ENCODE measurements at regions of chr7 and their contacts with region 1.

Region 1: DNA sequence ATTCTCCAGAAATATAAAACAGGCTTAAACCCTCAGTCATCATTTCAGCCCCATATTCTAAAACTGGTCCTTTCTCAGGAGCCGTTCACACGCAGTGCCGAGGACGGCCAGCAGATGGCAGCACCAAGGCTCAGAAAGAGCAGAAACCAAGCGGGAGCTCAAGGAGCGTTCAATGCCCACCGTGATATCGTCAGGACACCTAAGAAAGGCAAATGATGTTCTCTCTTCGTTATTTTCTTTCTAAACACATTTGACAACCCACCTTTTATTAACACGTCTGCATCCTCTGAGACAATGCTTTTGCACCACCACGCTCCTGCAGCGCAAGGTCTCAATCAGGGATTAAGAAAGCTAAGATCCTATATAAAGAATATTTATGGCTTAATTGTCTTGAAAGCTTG is 45.7 kb upstream of the RBM33 start:
- DNase-seq: peak; percentile 80 to 86
- ATAC-seq: peak; percentile 87 to 94 (median 91)
- H3K4me3 ChIP-seq: no peak overlapping the region
- H3K4me3 Mint-ChIP-seq: no peak overlapping the region
- H3K27ac ChIP-seq: no peak overlapping the region
- H3K27ac Mint-ChIP-seq: no peak overlapping the region
- H3K4me1 ChIP-seq: peaks cover 7% of the 10 kb centered on the region
- H3K4me1 Mint-ChIP-seq: peaks cover 5 to 9% of the 10 kb centered on the region in 2 donors
- H3K27me3 ChIP-seq: peaks cover 5% of the 10 kb centered on the region
- H3K27me3 Mint-ChIP-seq: peaks cover 31% of the 10 kb centered on the region in 2 donors
- CTCF ChIP-seq: peak; percentile 95

Region 2: GRCh38 chr7:154947604-154948003 is 651.2 kb before region 1 on chr7:
- intact Hi-C with region 1: no loop called
- DNase-seq: no peak
- ATAC-seq: no peak
- H3K4me3 ChIP-seq: no peak overlapping the region
- H3K4me3 Mint-ChIP-seq: no peak overlapping the region
- H3K27ac ChIP-seq: no peak overlapping the region
- H3K27ac Mint-ChIP-seq: no peak overlapping the region
- H3K4me1 ChIP-seq: no peaks in the 10 kb centered on the region
- H3K4me1 Mint-ChIP-seq: no peaks in the 10 kb centered on the region
- H3K27me3 ChIP-seq: no peaks in the 10 kb centered on the region
- H3K27me3 Mint-ChIP-seq: no peaks in the 10 kb centered on the region
- CTCF ChIP-seq: no peak

Region 3: GRCh38 chr7:155467846-155468784 is 130.7 kb before region 1 on chr7:
- intact Hi-C with region 1: no loop called
- DNase-seq: no peak
- ATAC-seq: peak in 1 of 3 donors; percentile 30
- H3K4me3 ChIP-seq: no peak overlapping the region
- H3K4me3 Mint-ChIP-seq: no peak overlapping the region
- H3K27ac ChIP-seq: no peak overlapping the region
- H3K27ac Mint-ChIP-seq: no peak overlapping the region
- H3K4me1 ChIP-seq: peaks cover 29% of the 10 kb centered on the region
- H3K4me1 Mint-ChIP-seq: peaks cover 10 to 12% of the 10 kb centered on the region in 2 donors
- H3K27me3 ChIP-seq: peaks cover 84% of the 10 kb centered on the region
- H3K27me3 Mint-ChIP-seq: peaks cover 68 to 71% of the 10 kb centered on the region in 2 donors
- CTCF ChIP-seq: no peak

Region 4: DNA sequence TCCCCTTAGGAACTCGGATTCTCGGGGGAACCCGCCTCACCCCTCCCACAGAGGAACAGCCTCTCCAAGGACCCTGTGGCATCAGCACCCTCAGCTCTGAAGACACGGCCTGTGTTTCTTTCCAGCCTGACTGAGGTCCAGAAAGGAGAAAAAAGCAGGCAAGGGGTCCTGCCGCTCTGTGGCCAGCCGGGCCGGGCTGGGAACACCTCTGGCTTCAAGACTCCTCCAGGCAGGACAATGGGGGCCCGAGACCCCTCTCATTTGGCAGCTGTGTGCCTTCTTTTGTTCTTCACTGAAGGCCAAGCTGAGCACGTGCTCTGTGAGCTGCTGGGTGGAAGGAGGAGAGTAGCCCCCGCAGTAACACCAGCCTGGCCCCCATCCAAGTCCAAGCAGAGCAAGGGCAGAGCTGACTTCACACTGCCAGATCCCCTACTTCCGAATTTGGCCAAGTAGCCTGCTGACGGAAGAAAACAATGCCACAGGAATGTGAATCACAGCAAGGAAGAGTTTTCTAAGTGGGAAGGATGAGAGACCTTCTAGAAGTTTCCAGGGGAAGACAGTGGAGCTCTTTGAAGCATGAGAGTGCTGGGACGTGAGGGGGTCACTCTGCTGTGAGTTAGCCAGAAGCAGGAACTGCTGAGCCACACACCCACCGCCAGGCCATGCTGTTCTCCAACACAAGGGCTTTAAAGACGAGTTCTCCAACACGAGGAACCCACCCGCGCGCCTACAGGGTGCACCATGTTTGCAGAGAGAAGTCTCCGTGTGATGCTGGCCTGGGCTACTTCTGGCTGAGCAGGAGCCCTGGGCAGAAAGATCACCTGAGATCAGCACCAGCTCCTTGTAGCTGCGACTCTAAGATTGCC is 55.6 kb before region 1 on chr7:
- intact Hi-C with region 1: no loop called
- DNase-seq: no peak
- ATAC-seq: no peak
- H3K4me3 ChIP-seq: no peak overlapping the region
- H3K4me3 Mint-ChIP-seq: no peak overlapping the region
- H3K27ac ChIP-seq: no peak overlapping the region
- H3K27ac Mint-ChIP-seq: no peak overlapping the region
- H3K4me1 ChIP-seq: no peaks in the 10 kb centered on the region
- H3K4me1 Mint-ChIP-seq: no peaks in the 10 kb centered on the region
- H3K27me3 ChIP-seq: no peaks in the 10 kb centered on the region
- H3K27me3 Mint-ChIP-seq: peaks cover 6 to 10% of the 10 kb centered on the region in 2 donors
- CTCF ChIP-seq: no peak

Region 5: GRCh38 chr7:155738652-155739537 is 140.1 kb after region 1 on chr7:
- intact Hi-C with region 1: loop called (anchors 1 kb)
- DNase-seq: peak; percentile 53 to 78
- ATAC-seq: peak; percentile 58 to 84 (median 71)
- H3K4me3 ChIP-seq: no peak overlapping the region
- H3K4me3 Mint-ChIP-seq: no peak overlapping the region
- H3K27ac ChIP-seq: no peak overlapping the region
- H3K27ac Mint-ChIP-seq: peak overlapping the region; percentile 29
- H3K4me1 ChIP-seq: peaks cover 3% of the 10 kb centered on the region
- H3K4me1 Mint-ChIP-seq: peaks cover 14 to 27% of the 10 kb centered on the region in 2 donors
- H3K27me3 ChIP-seq: no peaks in the 10 kb centered on the region
- H3K27me3 Mint-ChIP-seq: no peaks in the 10 kb centered on the region
- CTCF ChIP-seq: peak; percentile 67